CD4-positive, alpha-beta memory T cell (primary cell): ENCODE measurements at regions of chr12 and their contacts with region 1.

Region 1: DNA sequence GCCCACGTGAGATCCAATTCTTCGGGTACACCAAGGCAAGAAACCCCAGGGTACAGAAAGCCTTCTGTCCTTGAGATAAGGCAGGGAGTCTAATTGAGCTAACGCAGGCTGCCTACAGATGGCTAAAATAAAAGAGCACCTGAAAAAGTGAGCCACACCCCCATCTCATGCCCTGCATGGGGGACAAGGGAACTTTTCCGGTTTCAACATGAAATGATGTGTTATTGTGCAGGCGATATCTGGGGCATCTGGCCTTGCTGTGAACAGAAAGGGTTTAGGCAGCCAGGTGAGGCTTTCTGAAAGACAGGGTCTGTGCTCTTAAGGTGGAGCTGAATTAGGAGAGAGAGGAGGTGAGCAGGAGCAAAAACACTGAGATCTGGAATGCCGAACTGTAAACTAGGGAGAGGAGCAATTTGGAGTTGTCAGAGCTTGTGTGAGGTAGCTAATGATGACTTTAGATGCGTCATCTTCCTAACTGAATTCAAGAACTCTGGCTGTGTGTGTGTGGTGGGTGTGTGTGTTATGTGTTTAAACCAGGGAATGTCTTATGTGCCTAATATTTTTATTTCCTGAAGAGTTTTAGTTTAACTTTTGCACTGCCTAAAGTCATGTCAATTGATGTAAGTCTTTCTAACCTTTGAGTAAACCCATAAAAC is 20.1 kb upstream of the LDHB start:
- DNase-seq: peak; percentile 37 to 57 (median 45)
- H3K4me3 ChIP-seq: peak overlapping the region; percentile 16 to 49
- H3K4me3 Mint-ChIP-seq: peak overlapping the region; percentile 67 to 91 (median 81)
- H3K27ac ChIP-seq: peak overlapping the region; percentile 45
- H3K27ac Mint-ChIP-seq: peak overlapping the region; percentile 81 to 97 (median 85)
- H3K4me1 ChIP-seq: peaks cover 58% of the 10 kb centered on the region
- H3K4me1 Mint-ChIP-seq: peaks cover 43 to 62% (median 54%) of the 10 kb centered on the region in 4 donors
- H3K27me3 ChIP-seq: no peaks in the 10 kb centered on the region
- H3K27me3 Mint-ChIP-seq: no peaks in the 10 kb centered on the region

Region 2: GRCh38 chr12:21296751-21297406 is 380.9 kb before region 1 on chr12:
- CTCF ChIA-PET with region 1: interaction called, 7 read pairs
- POLR2A ChIA-PET with region 1: no interaction called
- intact Hi-C with region 1: loop called (anchors 2 kb)
- DNase-seq: peak in 4 of 5 donors; percentile 3 to 15 (median 14)
- H3K4me3 ChIP-seq: no peak overlapping the region
- H3K4me3 Mint-ChIP-seq: no peak overlapping the region
- H3K27ac ChIP-seq: no peak overlapping the region
- H3K27ac Mint-ChIP-seq: no peak overlapping the region
- H3K4me1 ChIP-seq: no peaks in the 10 kb centered on the region
- H3K4me1 Mint-ChIP-seq: peaks cover 0 to 11% (median 3%) of the 10 kb centered on the region in 4 donors
- H3K27me3 ChIP-seq: no peaks in the 10 kb centered on the region
- H3K27me3 Mint-ChIP-seq: peaks cover 0 to 3% of the 10 kb centered on the region in 2 donors

Region 3: DNA sequence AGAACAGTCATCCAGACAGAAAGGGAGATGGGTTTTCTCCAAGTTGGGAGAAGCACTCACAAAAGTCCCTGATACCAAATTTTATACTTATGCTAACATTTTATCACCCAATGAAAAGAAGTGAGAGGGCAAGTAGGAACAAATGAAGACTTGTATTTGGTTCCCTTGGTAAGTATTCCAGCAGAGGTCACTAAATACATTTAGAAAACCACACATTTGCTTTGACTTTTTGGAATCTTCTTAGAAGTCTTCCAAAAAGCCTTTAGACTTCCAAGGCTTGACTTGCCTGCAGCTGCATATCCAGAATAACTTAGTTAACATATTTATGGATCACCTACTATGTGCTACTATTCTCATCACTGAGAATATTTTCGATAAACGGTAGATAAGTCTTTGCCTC is 70.0 kb before region 1 on chr12:
- CTCF ChIA-PET with region 1: interaction called, 200 read pairs
- POLR2A ChIA-PET with region 1: interaction called, 13 read pairs
- intact Hi-C with region 1: loop called (anchors 1 kb)
- DNase-seq: peak in 4 of 5 donors; percentile 34 to 40 (median 36)
- H3K4me3 ChIP-seq: no peak overlapping the region
- H3K4me3 Mint-ChIP-seq: no peak overlapping the region
- H3K27ac ChIP-seq: no peak overlapping the region
- H3K27ac Mint-ChIP-seq: no peak overlapping the region
- H3K4me1 ChIP-seq: peaks cover 10% of the 10 kb centered on the region
- H3K4me1 Mint-ChIP-seq: peaks cover 0 to 7% (median 5%) of the 10 kb centered on the region in 4 donors
- H3K27me3 ChIP-seq: no peaks in the 10 kb centered on the region
- H3K27me3 Mint-ChIP-seq: no peaks in the 10 kb centered on the region

Region 4: GRCh38 chr12:21642707-21643389 is 34.9 kb before region 1 on chr12:
- CTCF ChIA-PET with region 1: interaction called, 79 read pairs
- POLR2A ChIA-PET with region 1: interaction called, 5 read pairs
- intact Hi-C with region 1: loop called (anchors 5 kb)
- DNase-seq: no peak
- H3K4me3 ChIP-seq: no peak overlapping the region
- H3K4me3 Mint-ChIP-seq: peak overlapping the region in 7 of 8 donors; percentile 25 to 49 (median 36)
- H3K27ac ChIP-seq: no peak overlapping the region
- H3K27ac Mint-ChIP-seq: peak overlapping the region in 6 of 7 donors; percentile 30 to 83 (median 50)
- H3K4me1 ChIP-seq: peaks cover 85% of the 10 kb centered on the region
- H3K4me1 Mint-ChIP-seq: peaks cover 55 to 92% (median 75%) of the 10 kb centered on the region in 4 donors
- H3K27me3 ChIP-seq: no peaks in the 10 kb centered on the region
- H3K27me3 Mint-ChIP-seq: no peaks in the 10 kb centered on the region

Region 5: DNA sequence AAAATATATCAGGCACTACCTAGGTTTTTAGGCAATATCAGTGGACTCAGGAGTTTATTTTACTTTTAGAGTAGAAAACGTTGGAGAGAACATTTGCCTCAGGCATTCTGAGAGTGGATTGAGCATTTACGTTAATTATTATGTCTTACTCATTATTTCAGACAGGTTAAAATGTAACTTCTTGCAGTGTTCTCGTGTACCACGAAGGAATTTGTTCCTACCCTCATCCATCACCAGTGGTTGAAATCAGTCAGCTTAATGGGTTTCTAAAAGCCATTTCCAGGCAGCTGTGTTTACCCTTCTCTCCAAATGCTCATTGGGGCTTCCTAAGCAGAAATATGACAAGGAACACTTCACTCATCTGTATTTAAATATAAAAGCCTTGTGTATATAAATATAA is 11.0 kb before region 1 on chr12:
- CTCF ChIA-PET with region 1: interaction called, 16 read pairs
- POLR2A ChIA-PET with region 1: interaction called, 3 read pairs
- intact Hi-C with region 1: no loop called
- DNase-seq: no peak
- H3K4me3 ChIP-seq: no peak overlapping the region
- H3K4me3 Mint-ChIP-seq: no peak overlapping the region
- H3K27ac ChIP-seq: no peak overlapping the region
- H3K27ac Mint-ChIP-seq: no peak overlapping the region
- H3K4me1 ChIP-seq: no peaks in the 10 kb centered on the region
- H3K4me1 Mint-ChIP-seq: peaks cover 0 to 1% (median 0%) of the 10 kb centered on the region in 4 donors
- H3K27me3 ChIP-seq: no peaks in the 10 kb centered on the region
- H3K27me3 Mint-ChIP-seq: peaks cover 0 to 6% of the 10 kb centered on the region in 2 donors